Activated T-helper 1 cell treated with anti-CD3 and anti-CD28 coated beads, Interleukin-12 subunit alpha, Interleukin-12 subunit beta, Interleukin-2, Interleukin-4 antibody, amounts not matched to agents 30 ng/mL and 10 ng/mL and 1 ng/mL, durations not matched to agents 14 hours and 24 hours and 36 hours (primary cell): ENCODE measurements at regions of chr3 and their contacts with region 1.

Region 1: DNA sequence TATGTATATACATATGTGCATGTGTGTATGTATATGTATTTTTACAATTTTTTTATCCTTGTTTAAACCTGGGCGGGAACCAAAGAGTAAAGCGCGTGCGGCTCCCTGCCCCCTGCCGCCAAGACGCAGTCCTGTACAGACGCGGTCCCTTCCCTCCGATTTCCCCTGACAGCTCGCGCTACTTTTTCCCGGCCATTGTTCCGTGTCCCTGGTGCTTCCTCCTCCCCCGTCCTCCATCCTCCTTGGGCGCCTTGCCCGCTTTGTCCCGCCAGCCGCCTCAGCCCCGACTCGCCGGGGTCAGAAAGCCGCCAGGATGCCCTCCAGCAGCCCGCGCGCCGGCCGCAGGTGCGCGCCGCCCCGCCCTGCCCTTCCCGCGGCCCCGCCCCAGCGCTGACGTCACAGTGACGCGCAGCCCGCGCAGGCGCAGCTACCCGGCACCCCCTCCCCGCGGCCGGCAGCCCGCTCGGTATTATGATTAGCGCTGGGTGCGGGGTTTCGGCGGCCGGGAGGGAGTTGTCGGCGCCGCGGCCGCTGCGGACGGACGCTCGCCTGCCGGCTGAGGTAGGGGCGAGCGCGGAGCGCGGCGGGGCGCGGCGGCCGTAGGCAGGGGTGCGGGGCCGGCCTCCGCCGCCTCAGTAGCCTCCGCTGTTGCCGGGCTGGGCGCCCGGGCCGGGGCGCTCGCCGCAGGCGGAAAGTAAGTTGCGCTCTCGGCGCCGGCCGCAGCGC is at the start of gene SNRK:
- DNase-seq: peak; percentile 89
- H3K4me3 Mint-ChIP-seq: peak within 1 kb of the TSS; percentile 98
- H3K27ac Mint-ChIP-seq: peak within 1 kb of the TSS; percentile 97
- H3K4me1 Mint-ChIP-seq: peaks cover 49% of the 10 kb centered on the region
- H3K27me3 Mint-ChIP-seq: peaks cover 2% of the 10 kb centered on the region
- total RNA-seq, gene SNRK: 37.7 and 38.1 TPM in 2 replicates

Region 2: GRCh38 chr3:42804106-42804830 is 482.0 kb before region 1 on chr3 and contains the start of gene HIGD1A:
- intact Hi-C with region 1: loop called (anchors 5 kb)
- DNase-seq: peak; percentile 92
- H3K4me3 Mint-ChIP-seq: peak within 1 kb of the TSS; percentile 99
- H3K27ac Mint-ChIP-seq: peak within 1 kb of the TSS; percentile 90
- H3K4me1 Mint-ChIP-seq: peaks cover 43% of the 10 kb centered on the region
- H3K27me3 Mint-ChIP-seq: peaks cover 27% of the 10 kb centered on the region
- total RNA-seq, gene HIGD1A: 90.1 and 97.5 TPM in 2 replicates

Region 3: GRCh38 chr3:43162230-43163084 is 123.8 kb before region 1 on chr3:
- intact Hi-C with region 1: loop called (anchors 1 kb)
- DNase-seq: peak; percentile 53
- H3K4me3 Mint-ChIP-seq: peak overlapping the region; percentile 72
- H3K27ac Mint-ChIP-seq: peak overlapping the region; percentile 83
- H3K4me1 Mint-ChIP-seq: peaks cover 23% of the 10 kb centered on the region
- H3K27me3 Mint-ChIP-seq: no peaks in the 10 kb centered on the region

Region 4: GRCh38 chr3:43345877-43346276 is 59.6 kb after region 1 on chr3:
- intact Hi-C with region 1: loop called (anchors 1 kb)
- DNase-seq: no peak
- H3K4me3 Mint-ChIP-seq: peak overlapping the region; percentile 63
- H3K27ac Mint-ChIP-seq: peak overlapping the region; percentile 86
- H3K4me1 Mint-ChIP-seq: peaks cover 80% of the 10 kb centered on the region
- H3K27me3 Mint-ChIP-seq: no peaks in the 10 kb centered on the region

Region 5: GRCh38 chr3:43448098-43448497 is 161.8 kb after region 1 on chr3:
- intact Hi-C with region 1: loop called (anchors 2 kb)
- DNase-seq: no peak
- H3K4me3 Mint-ChIP-seq: no peak overlapping the region
- H3K27ac Mint-ChIP-seq: no peak overlapping the region
- H3K4me1 Mint-ChIP-seq: peaks cover 11% of the 10 kb centered on the region
- H3K27me3 Mint-ChIP-seq: peaks cover 2% of the 10 kb centered on the region

Region 6: DNA sequence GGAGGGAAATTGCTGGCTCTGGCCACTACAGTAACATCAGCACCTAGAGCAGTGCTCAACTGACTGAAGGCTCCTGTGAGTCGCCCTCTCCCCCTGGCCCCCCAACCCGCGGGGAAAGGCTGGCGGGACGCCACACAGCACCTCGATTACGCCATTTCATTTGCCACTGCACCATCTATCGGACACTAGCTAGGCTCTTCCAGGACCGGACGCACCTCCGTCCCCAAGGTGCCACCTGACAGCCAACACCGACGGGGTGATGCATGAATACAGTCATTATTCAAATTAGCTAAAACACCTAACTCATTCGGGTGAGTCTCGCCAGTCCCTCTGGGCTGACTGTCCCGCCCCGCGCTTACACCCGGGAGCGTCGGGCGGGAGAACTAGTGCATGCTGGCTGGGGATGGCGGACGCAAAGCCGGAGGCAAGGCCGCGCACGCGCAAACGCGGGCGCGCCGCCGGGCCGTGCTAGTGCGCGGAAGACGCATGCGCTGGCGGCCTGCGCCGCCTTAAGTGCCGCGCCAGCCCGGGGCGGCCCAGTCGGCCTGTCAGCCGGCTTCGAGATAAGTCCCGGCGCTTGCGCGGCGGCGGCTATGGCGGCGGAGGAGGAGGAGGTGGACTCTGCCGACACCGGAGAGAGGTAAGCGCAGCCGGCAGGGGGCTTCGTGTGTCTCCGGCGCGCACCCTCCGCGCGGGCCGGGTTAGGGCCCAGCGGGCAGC is 404.3 kb after region 1 on chr3 and contains the start of gene ABHD5:
- intact Hi-C with region 1: loop called (anchors 1 kb)
- DNase-seq: peak; percentile 91
- H3K4me3 Mint-ChIP-seq: peak within 1 kb of the TSS; percentile 92
- H3K27ac Mint-ChIP-seq: peak within 1 kb of the TSS; percentile 92
- H3K4me1 Mint-ChIP-seq: peaks cover 39% of the 10 kb centered on the region
- H3K27me3 Mint-ChIP-seq: peaks cover 2% of the 10 kb centered on the region
- total RNA-seq, gene ABHD5: 20.2 and 20.4 TPM in 2 replicates

Region 7: DNA sequence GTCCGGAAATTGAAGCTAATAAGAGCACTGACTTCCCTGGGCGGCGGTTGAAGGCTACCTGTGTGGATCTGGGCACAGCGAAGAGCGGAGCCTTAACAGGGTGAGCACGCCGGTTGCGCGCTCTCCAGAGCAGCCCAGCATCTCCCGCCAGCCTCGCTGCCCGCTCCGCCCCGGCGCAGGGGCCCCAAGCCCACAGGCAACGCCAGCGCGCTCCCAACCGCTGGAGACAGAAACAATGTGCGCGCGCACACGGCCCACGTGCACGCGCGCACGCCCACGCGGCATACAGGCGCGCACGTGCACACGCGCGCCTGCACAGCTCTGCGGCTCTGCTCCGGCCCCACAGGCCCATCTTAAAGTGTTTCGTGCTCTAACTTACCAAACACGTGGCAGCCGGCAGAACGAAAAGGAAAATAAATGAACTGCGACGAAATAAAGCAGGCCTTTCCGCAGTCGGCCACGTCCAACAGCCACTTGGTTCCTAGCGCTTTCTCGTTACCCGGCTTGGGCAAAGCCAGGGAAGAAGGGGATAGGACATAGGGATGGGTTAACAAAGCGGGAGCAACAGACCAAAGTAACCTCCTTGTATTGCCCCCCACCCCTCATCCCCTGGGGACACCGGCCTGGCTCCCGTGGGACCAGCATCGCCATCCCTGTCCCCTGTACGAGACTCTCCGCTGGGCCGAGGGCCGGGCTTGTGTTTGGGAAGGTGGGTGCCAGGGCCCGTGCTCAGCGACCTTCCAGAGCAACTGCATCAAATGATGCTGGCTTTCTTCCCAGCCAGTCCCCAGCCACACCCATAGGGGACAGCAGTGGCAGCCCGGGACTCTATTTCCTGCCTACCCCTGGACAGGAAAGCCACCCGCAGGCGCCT is 608.1 kb after region 1 on chr3:
- intact Hi-C with region 1: no loop called
- DNase-seq: no peak
- H3K4me3 Mint-ChIP-seq: peak overlapping the region; percentile 56
- H3K27ac Mint-ChIP-seq: no peak overlapping the region
- H3K4me1 Mint-ChIP-seq: peaks cover 6% of the 10 kb centered on the region
- H3K27me3 Mint-ChIP-seq: peaks cover 41% of the 10 kb centered on the region